Left ventricle myocardium inferior (tissue), 1 donor: ENCODE measurements at regions of chr4 and their contacts with region 1.

Region 1: DNA sequence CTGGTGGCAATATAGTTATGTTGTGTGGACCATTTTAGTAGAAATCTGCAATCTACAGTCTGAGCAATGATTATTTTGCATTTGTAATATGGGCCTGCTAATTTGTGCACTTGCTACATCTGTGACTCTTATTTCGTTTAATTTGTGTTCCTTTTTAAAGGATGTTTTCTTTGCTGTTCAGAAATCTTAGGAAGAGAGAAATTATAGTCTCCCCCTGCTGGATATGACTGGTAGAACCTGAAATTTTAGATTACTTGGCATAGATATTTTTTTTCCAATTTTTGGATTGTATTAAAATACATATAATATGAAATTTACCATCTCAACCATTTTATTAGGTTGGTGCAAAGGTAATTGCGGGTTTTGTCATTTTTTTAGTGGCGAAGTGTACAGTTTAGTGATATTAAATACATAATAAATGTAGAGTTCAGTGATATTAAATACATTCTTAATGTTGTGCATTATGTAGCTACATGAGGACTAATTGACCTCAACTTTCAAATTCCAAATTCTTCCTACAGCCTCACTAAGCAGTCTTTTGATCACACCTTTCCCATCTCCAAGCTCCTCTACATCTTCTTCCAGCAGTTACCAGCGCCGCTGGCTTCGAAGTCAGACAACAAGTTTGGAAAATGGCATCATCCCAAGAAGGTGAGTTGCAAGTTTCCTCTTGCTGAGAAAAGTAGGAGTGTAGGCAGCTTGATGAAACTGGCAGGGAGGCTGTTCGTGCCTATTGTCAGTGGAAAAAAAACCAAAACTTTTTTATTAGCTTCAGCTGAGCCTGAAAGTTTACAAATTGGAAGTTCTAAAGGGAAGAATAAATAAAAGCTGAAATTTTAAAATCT is 82.2 kb downstream of the FNIP2 start:
- DNase-seq: no peak
- H3K4me3 ChIP-seq: no peak overlapping the region
- H3K27ac ChIP-seq: peak overlapping the region; percentile 20
- H3K4me1 ChIP-seq: peaks cover 79% of the 10 kb centered on the region
- H3K27me3 ChIP-seq: no peaks in the 10 kb centered on the region
- CTCF ChIP-seq: peak; percentile 77

Region 2: DNA sequence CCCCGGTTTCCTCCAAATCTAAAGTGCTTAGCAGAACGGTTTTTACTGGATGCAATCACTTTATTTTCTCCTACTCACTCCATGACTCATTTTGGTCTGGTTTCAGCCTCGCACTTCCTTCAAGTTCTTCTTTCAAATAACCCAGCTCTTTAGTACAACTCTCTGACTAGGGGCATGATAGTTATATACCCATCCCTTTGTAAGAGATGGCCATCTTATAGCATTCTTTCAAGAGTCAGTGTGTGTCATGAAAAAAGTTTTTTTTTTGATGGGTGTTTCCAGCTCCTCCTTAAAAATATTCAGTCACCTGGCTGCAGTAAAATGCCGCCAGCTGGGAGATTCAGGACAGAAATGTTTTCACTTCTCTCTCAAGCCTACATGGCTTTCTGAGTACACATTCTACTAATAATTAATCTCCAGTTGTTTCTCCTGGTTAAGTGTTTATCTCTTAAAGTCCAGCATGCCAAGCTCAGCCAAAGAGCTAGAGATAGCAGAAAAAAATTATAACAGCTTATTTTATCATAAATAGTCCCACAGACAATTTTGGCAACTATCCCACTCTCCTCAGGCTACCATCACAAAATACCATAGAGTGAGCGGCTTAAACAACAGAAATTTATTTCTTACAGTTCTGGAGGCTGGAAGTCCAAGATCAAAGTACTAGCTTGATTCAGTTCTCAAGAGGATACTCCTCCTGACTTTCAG is 817.5 kb before region 1 on chr4:
- intact Hi-C with region 1: no loop called
- DNase-seq: no peak
- H3K4me3 ChIP-seq: no peak overlapping the region
- H3K27ac ChIP-seq: peak overlapping the region; percentile 71
- H3K4me1 ChIP-seq: peaks cover 17% of the 10 kb centered on the region
- H3K27me3 ChIP-seq: no peaks in the 10 kb centered on the region
- CTCF ChIP-seq: no peak

Region 3: GRCh38 chr4:158729716-158730559 is 121.1 kb before region 1 on chr4:
- intact Hi-C with region 1: loop called (anchors 5 kb)
- DNase-seq: peak; percentile 48
- H3K4me3 ChIP-seq: no peak overlapping the region
- H3K27ac ChIP-seq: no peak overlapping the region
- H3K4me1 ChIP-seq: peaks cover 6% of the 10 kb centered on the region
- H3K27me3 ChIP-seq: no peaks in the 10 kb centered on the region
- CTCF ChIP-seq: peak; percentile 94

Region 4: GRCh38 chr4:159240687-159241086 is 389.7 kb after region 1 on chr4:
- intact Hi-C with region 1: no loop called
- DNase-seq: no peak
- H3K4me3 ChIP-seq: no peak overlapping the region
- H3K27ac ChIP-seq: peak overlapping the region; percentile 64
- H3K4me1 ChIP-seq: peaks cover 67% of the 10 kb centered on the region
- H3K27me3 ChIP-seq: no peaks in the 10 kb centered on the region
- CTCF ChIP-seq: no peak